ENCODE measurements at regions of chr10 and their contacts with region 1.

Region 1: GRCh38 chr10:28663576-28664313 is 13.6 kb upstream of the BAMBI start:
- DNase-seq: no peak
- ATAC-seq: peak; percentile 97
- H3K4me3 ChIP-seq: no peak overlapping the region
- H3K27ac ChIP-seq: no peak overlapping the region
- H3K4me1 ChIP-seq: no peaks in the 10 kb centered on the region
- H3K27me3 ChIP-seq: peaks cover 2 to 5% of the 10 kb centered on the region in 2 experiments
- CTCF ChIP-seq: peak; percentile 95 to 96 (median 96)
- EP300 ChIP-seq: no peak
- POLR2A ChIP-seq: no peak
- RAD21 ChIP-seq: peak; percentile 96

Region 2: DNA sequence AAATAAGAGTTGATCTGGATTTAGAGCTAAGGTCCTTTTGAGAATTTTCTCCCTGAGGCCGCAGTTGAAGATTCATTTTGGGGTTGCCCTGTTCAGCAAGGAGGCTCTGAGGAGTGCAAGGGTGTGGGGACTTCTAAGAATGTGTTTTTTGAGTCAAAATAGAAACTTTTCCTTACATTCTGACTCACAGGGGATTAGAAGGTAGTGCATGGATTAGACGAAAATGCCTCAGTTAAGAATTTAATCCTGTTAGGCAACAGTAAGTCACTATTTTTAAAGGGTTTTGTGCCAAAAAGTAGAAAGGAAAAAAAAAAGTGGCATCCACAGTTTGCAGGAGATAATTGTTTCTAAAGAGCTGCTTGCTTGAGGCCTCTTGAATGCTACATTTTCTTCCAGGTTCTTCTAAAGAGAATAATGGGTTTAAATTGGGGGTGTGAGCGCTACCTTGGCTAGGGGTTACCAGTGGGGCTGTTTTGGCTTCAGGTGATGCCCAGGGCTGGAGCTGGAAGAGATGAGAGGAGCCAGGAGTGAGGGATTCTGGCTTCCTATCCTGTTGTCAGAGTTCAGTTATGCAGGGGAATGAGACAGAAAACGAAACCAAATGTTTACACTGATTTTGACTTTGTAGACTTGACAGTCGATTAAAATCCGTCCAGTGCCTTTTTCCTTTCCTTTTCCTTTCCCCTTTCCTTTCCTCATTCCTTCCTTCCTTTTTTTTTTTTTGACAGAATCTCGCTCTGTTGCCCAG is 66.5 kb after region 1 on chr10:
- CTCF ChIA-PET with region 1: no interaction called
- POLR2A ChIA-PET with region 1: no interaction called
- RAD21 ChIA-PET with region 1: no interaction called
- SMC1A ChIA-PET with region 1: no interaction called
- in situ Hi-C with region 1: no loop called
- intact Hi-C with region 1: no loop called
- DNase-seq: no peak
- ATAC-seq: no peak
- H3K4me3 ChIP-seq: no peak overlapping the region
- H3K27ac ChIP-seq: no peak overlapping the region
- H3K4me1 ChIP-seq: no peaks in the 10 kb centered on the region
- H3K27me3 ChIP-seq: no peaks in the 10 kb centered on the region
- CTCF ChIP-seq: no peak
- EP300 ChIP-seq: no peak
- POLR2A ChIP-seq: no peak
- RAD21 ChIP-seq: no peak

Region 3: DNA sequence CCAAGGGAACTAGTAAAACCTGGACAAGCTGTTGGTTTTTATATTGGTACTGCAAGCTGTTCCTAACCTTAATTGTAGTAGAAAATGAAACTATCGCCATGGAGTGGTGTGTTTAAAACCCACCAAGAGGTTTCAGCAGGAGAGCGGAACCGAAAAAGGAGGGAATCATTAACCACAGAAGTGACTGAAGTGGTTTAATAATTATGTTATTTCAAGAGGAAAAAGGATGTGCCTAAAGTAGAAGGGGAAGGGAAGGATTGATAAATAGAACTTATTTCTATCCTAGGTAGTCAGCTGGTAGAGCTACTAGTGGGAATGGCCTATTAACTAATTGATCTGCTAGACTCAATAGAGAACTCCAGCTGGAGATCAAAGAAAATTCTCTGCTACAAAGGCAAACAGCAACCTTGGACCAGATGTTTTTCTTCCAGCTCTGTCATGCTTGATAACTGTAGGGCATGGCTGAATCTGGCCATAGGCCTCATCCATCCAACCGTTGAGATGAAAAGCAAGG is 105.4 kb after region 1 on chr10:
- CTCF ChIA-PET with region 1: no interaction called
- POLR2A ChIA-PET with region 1: no interaction called
- RAD21 ChIA-PET with region 1: no interaction called
- SMC1A ChIA-PET with region 1: no interaction called
- in situ Hi-C with region 1: no loop called
- intact Hi-C with region 1: no loop called
- DNase-seq: no peak
- ATAC-seq: no peak
- H3K4me3 ChIP-seq: no peak overlapping the region
- H3K27ac ChIP-seq: no peak overlapping the region
- H3K4me1 ChIP-seq: no peaks in the 10 kb centered on the region
- H3K27me3 ChIP-seq: no peaks in the 10 kb centered on the region
- CTCF ChIP-seq: no peak
- EP300 ChIP-seq: no peak
- POLR2A ChIP-seq: no peak
- RAD21 ChIP-seq: no peak

Region 4: DNA sequence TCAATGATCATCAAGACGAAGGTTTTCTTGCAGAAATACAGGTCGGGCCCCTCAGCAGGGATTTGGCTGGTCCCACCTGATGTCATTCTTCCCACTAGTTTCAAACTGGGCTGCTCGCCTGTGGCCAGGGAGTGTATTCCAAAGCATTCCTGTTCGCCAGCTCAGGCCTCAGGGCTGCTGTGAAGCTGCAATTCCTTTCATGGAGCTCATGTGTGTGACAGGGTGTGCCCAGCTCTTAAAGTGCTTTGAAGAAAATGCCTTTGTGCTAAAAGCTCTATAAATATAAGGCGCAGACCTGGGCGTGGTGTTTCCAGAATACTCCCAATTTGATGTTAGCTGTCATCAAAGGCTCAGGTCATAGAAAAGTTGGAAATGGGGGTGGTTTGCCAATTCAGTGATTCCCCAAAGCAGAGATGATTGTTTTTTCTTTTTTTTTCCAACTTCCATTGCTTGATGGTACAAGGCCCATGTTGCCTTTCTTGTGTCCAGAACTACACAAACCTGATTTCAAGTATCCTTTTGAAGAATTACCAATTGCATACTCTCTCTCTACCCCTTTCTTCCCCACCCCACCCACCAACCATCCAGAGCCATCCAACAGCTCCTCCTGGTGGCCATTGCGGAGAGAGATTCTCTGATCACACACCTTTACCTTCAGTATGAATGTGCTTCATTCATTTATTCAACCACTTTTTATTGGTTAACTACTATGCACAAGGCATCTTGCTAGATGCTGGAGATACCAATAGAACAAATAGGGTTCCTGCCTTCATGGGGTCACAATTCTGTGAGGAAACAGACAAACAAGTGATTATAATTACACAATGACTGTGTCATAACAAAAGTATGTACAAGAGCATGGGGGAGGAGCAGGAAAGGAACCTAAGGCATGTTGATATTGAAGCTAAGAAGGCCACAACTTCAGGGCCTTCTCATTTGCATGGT is 327.9 kb after region 1 on chr10:
- CTCF ChIA-PET with region 1: interaction called, 56 read pairs
- POLR2A ChIA-PET with region 1: no interaction called
- RAD21 ChIA-PET with region 1: interaction called, 8 read pairs
- SMC1A ChIA-PET with region 1: interaction called, 15 read pairs
- in situ Hi-C with region 1: loop called (anchors 5 kb)
- intact Hi-C with region 1: loop called (anchors 1 kb)
- DNase-seq: no peak
- ATAC-seq: peak; percentile 80
- H3K4me3 ChIP-seq: no peak overlapping the region
- H3K27ac ChIP-seq: no peak overlapping the region
- H3K4me1 ChIP-seq: no peaks in the 10 kb centered on the region
- H3K27me3 ChIP-seq: no peaks in the 10 kb centered on the region
- CTCF ChIP-seq: peak; percentile 57 to 67 (median 64); a peak in 5 of 6 replicates
- EP300 ChIP-seq: no peak
- POLR2A ChIP-seq: no peak
- RAD21 ChIP-seq: peak; percentile 75

Region 5: GRCh38 chr10:29131952-29132820 is 468.4 kb after region 1 on chr10:
- CTCF ChIA-PET with region 1: interaction called, 4 read pairs
- POLR2A ChIA-PET with region 1: no interaction called
- RAD21 ChIA-PET with region 1: interaction called, 3 read pairs
- SMC1A ChIA-PET with region 1: interaction called, 4 read pairs
- in situ Hi-C with region 1: no loop called
- intact Hi-C with region 1: loop called (anchors 5 kb)
- DNase-seq: no peak
- ATAC-seq: no peak
- H3K4me3 ChIP-seq: no peak overlapping the region
- H3K27ac ChIP-seq: no peak overlapping the region
- H3K4me1 ChIP-seq: no peaks in the 10 kb centered on the region
- H3K27me3 ChIP-seq: no peaks in the 10 kb centered on the region
- CTCF ChIP-seq: no peak
- EP300 ChIP-seq: no peak
- POLR2A ChIP-seq: no peak
- RAD21 ChIP-seq: no peak

Region 6: GRCh38 chr10:29443745-29444523 is 780.2 kb after region 1 on chr10:
- CTCF ChIA-PET with region 1: no interaction called
- POLR2A ChIA-PET with region 1: no interaction called
- RAD21 ChIA-PET with region 1: no interaction called
- SMC1A ChIA-PET with region 1: no interaction called
- in situ Hi-C with region 1: loop called (anchors 10 kb)
- intact Hi-C with region 1: no loop called
- DNase-seq: no peak
- ATAC-seq: peak; percentile 41
- H3K4me3 ChIP-seq: no peak overlapping the region
- H3K27ac ChIP-seq: no peak overlapping the region
- H3K4me1 ChIP-seq: no peaks in the 10 kb centered on the region
- H3K27me3 ChIP-seq: no peaks in the 10 kb centered on the region
- CTCF ChIP-seq: no peak
- EP300 ChIP-seq: no peak
- POLR2A ChIP-seq: no peak
- RAD21 ChIP-seq: no peak